Testis (tissue), 5 donors: ENCODE measurements at regions of chr19 and their contacts with region 1.

Region 1: DNA sequence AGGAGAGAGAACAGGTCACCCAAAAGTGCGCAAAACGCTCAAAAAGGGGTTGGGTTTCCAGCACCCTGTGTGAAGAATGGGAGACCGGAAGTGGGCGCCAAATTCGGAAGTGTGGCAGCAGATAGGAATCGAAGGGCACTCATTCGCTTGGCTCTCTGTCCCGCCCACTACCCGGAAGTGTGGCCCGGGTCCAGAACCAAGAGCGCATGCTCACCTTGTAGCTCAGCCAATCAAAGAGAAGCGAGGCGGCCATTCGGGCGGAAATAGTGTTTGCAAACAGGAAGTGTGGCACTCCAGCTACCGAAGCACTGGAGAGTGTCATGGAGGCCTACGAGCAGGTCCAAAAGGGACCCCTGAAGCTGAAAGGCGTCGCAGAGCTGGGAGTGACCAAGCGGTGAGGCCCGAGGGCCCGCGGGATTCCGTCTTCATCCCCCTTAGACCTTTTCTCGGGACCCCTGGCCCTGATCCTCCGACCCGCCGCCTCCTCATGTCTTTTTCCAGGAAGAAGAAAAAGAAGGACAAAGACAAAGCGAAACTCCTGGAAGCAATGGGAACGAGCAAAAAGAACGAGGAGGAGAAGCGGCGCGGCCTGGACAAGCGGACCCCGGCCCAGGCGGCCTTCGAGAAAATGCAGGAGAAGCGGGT is at the start of gene FAM32A:
- DNase-seq: peak; percentile 98
- H3K4me3 ChIP-seq: peak within 1 kb of the TSS; percentile 82 to 92
- H3K27ac ChIP-seq: peak within 1 kb of the TSS; percentile 46 to 75
- H3K4me1 ChIP-seq: peaks cover 6% of the 10 kb centered on the region
- H3K27me3 ChIP-seq: no peaks in the 10 kb centered on the region
- CTCF ChIP-seq: peak in 2 of 3 experiments; percentile 8 to 29
- POLR2A ChIP-seq: no peak
- total RNA-seq, gene FAM32A: 62.0 to 87.0 TPM

Region 2: DNA sequence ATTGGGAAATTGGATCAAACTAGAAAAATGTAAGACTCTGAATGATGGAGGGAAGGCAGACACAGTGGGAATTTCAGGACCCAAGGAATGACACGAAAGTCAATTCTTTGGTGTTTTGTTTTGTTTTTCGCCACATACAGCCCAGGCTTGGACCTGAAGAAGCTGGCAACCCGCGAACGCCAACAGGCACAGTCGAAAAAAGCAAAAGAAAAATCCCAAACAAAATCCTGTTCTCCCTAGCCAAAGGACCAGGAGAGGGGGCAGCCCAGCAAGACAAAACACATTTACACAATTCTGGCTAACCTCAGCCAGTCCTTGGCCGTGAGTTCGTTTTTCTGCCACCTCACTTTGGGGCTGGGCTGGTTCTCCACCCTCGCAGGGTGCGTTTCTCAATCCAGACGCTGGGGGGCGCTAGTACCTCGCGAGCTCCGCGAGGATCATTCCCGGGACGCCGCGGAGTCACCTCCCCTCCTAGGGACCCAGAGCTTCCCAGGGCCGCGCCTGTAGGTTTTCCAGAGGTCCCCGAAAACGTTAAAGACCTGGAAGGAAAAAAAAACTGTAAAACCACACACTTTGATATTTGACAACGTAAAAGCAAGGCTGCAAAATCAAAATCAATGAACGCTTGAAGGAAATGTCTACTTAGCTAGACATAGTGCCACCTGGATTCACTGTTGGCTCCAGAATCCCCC is 143.8 kb before region 1 on chr19:
- intact Hi-C with region 1: loop called (anchors 5 kb)
- DNase-seq: peak; percentile 87
- H3K4me3 ChIP-seq: no peak overlapping the region
- H3K27ac ChIP-seq: no peak overlapping the region
- H3K4me1 ChIP-seq: peaks cover 3% of the 10 kb centered on the region
- H3K27me3 ChIP-seq: no peaks in the 10 kb centered on the region
- CTCF ChIP-seq: peak; percentile 94 to 99 (median 94)
- POLR2A ChIP-seq: no peak

Region 3: GRCh38 chr19:16111160-16111908 is 73.9 kb before region 1 on chr19 and contains the start of gene RAB8A:
- intact Hi-C with region 1: loop called (anchors 10 kb)
- DNase-seq: peak; percentile 99
- H3K4me3 ChIP-seq: peak within 1 kb of the TSS; percentile 71 to 96
- H3K27ac ChIP-seq: peak within 1 kb of the TSS; percentile 85 to 97
- H3K4me1 ChIP-seq: peaks cover 16% of the 10 kb centered on the region
- H3K27me3 ChIP-seq: no peaks in the 10 kb centered on the region
- CTCF ChIP-seq: peak; percentile 95 to 99 (median 98)
- POLR2A ChIP-seq: no peak
- total RNA-seq, gene RAB8A: 63.3 to 69.0 TPM